ENCODE measurements at regions of chr19 and their contacts with region 1.

Region 1: GRCh38 chr19:57682226-57682766 is 519 bp downstream of the ZNF551 start:
- DNase-seq: no peak
- ATAC-seq: no peak
- H3K4me3 ChIP-seq: peak overlapping the region; percentile 93
- H3K4me3 Mint-ChIP-seq: peak overlapping the region; percentile 89 to 99 (median 97)
- H3K27ac ChIP-seq: peak overlapping the region; percentile 80
- H3K27ac Mint-ChIP-seq: peak overlapping the region; percentile 90 to 98 (median 96)
- H3K4me1 ChIP-seq: peaks cover 9 to 13% of the 10 kb centered on the region in 2 donors
- H3K4me1 Mint-ChIP-seq: peaks cover 25 to 46% (median 39%) of the 10 kb centered on the region in 7 donors
- H3K27me3 ChIP-seq: no peaks in the 10 kb centered on the region
- H3K27me3 Mint-ChIP-seq: peaks cover 2 to 8% (median 7%) of the 10 kb centered on the region in 5 donors

Region 2: DNA sequence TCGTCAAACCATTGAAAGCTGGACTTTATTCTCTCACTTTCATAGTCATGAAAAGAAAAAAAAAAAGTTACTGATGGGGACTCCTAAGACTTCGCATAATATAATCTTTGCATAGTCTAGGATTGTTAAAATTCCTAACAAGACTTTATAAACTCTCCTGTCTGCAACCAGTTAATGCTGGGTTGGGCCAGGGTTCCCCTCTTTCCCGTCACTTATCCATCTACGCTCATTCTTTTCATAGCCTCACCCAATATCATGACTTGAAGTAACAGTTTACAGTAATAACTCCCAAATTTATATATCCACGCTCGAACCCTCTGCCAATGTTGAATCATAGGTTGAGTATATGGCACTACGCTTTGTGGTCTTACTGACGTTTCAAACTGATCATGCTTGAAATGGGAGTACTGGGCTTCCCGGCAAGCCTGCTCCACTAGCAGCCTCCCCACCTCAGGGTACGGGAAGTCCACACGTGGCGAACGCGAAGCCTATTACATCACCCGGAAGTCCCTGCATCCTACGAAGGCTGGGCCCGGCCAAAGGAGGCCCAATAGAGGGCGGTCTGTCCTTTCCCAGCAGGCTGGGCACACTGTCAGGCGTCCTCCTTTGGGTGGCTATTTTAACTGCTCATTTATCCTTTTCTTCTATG is 402.8 kb before region 1 on chr19:
- CTCF ChIA-PET with region 1: no interaction called
- POLR2A ChIA-PET with region 1: no interaction called
- intact Hi-C with region 1: loop called in 1 of 2 experiments (anchors 1 kb)
- DNase-seq: peak in 6 of 9 donors; percentile 60 to 81 (median 78)
- ATAC-seq: peak; percentile 85
- H3K4me3 ChIP-seq: peak overlapping the region; percentile 80
- H3K4me3 Mint-ChIP-seq: no peak overlapping the region
- H3K27ac ChIP-seq: peak overlapping the region; percentile 98
- H3K27ac Mint-ChIP-seq: peak overlapping the region in 2 of 9 donors; percentile 6 to 51
- H3K4me1 ChIP-seq: peaks cover 18 to 23% of the 10 kb centered on the region in 2 donors
- H3K4me1 Mint-ChIP-seq: peaks cover 7 to 33% (median 25%) of the 10 kb centered on the region in 7 donors
- H3K27me3 ChIP-seq: no peaks in the 10 kb centered on the region
- H3K27me3 Mint-ChIP-seq: no peaks in the 10 kb centered on the region

Region 3: DNA sequence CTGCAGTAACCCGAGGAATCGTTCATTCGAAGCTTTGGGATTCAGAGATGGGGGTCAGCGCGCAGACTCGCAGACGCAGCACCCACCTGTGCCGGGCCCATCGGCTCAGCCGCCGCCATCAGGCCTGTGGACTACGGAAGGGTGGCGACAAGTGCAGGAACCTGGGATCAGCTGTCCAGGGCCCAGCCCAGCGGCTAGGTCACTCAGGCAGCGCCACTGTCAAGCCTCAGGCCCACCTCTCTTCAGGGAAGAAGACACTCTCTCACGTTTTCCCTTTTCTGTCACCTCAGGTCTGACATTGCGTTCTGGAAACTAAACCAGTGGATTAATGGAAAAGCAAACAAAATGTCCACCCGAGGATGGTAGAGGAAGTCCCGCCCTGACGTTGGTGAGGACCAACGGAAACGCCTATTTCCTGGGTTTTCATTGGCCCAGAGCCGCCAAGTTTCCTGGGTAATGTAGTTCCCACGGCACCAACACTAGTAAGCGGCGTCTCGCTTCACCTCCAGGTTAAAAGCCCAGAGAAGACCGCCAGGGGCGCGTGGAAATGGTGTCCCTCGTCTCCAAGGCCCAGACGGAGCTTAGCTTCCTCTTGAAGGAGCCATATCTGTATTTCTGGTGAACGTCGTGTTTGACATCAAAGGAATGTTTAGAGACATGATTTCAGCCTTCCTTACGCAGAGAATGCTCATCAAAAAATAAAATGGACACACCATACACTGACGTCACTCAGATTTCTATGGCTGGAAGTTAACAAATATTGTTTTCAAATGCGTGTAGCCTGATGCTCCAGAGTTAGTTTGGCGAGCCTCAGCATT is 204.9 kb before region 1 on chr19 and contains the start of gene ZNF772:
- CTCF ChIA-PET with region 1: no interaction called
- POLR2A ChIA-PET with region 1: no interaction called
- intact Hi-C with region 1: loop called in 1 of 2 experiments (anchors 1 kb)
- DNase-seq: peak; percentile 55 to 96 (median 88)
- ATAC-seq: peak; percentile 99
- H3K4me3 ChIP-seq: peak within 1 kb of the TSS; percentile 80
- H3K4me3 Mint-ChIP-seq: peak within 1 kb of the TSS; percentile 87 to 95 (median 92)
- H3K27ac ChIP-seq: peak within 1 kb of the TSS; percentile 77
- H3K27ac Mint-ChIP-seq: peak within 1 kb of the TSS; percentile 84 to 96 (median 89)
- H3K4me1 ChIP-seq: peaks cover 5 to 12% of the 10 kb centered on the region in 2 donors
- H3K4me1 Mint-ChIP-seq: peaks cover 10 to 26% (median 19%) of the 10 kb centered on the region in 7 donors
- H3K27me3 ChIP-seq: no peaks in the 10 kb centered on the region
- H3K27me3 Mint-ChIP-seq: peaks cover 0 to 7% (median 0%) of the 10 kb centered on the region in 5 donors
- total RNA-seq, gene ZNF772: 1.5 to 20.5 (median 4.3) TPM

Region 4: GRCh38 chr19:57613941-57614743 is 68.2 kb before region 1 on chr19 and contains the start of gene ZNF134:
- CTCF ChIA-PET with region 1: no interaction called
- POLR2A ChIA-PET with region 1: no interaction called
- intact Hi-C with region 1: loop called (anchors 1 kb)
- DNase-seq: peak; percentile 74 to 90 (median 84)
- ATAC-seq: peak; percentile 100
- H3K4me3 ChIP-seq: peak within 1 kb of the TSS; percentile 94
- H3K4me3 Mint-ChIP-seq: peak within 1 kb of the TSS; percentile 79 to 95 (median 90)
- H3K27ac ChIP-seq: peak within 1 kb of the TSS; percentile 76
- H3K27ac Mint-ChIP-seq: peak within 1 kb of the TSS; percentile 78 to 92 (median 86)
- H3K4me1 ChIP-seq: peaks cover 14 to 15% of the 10 kb centered on the region in 2 donors
- H3K4me1 Mint-ChIP-seq: peaks cover 18 to 43% (median 34%) of the 10 kb centered on the region in 7 donors
- H3K27me3 ChIP-seq: no peaks in the 10 kb centered on the region
- H3K27me3 Mint-ChIP-seq: no peaks in the 10 kb centered on the region
- total RNA-seq, gene ZNF134: 14.6 to 33.9 (median 25.7) TPM

Region 5: GRCh38 chr19:57719424-57719823 is 37.1 kb after region 1 on chr19:
- CTCF ChIA-PET with region 1: no interaction called
- POLR2A ChIA-PET with region 1: no interaction called
- intact Hi-C with region 1: no loop called
- DNase-seq: no peak
- ATAC-seq: no peak
- H3K4me3 ChIP-seq: peak overlapping the region; percentile 14
- H3K4me3 Mint-ChIP-seq: no peak overlapping the region
- H3K27ac ChIP-seq: no peak overlapping the region
- H3K27ac Mint-ChIP-seq: no peak overlapping the region
- H3K4me1 ChIP-seq: no peaks in the 10 kb centered on the region
- H3K4me1 Mint-ChIP-seq: peaks cover 0 to 11% (median 5%) of the 10 kb centered on the region in 7 donors
- H3K27me3 ChIP-seq: no peaks in the 10 kb centered on the region
- H3K27me3 Mint-ChIP-seq: no peaks in the 10 kb centered on the region

Region 6: GRCh38 chr19:57746580-57747471 is 64.5 kb after region 1 on chr19 and contains the start of gene ZNF776:
- CTCF ChIA-PET with region 1: no interaction called
- POLR2A ChIA-PET with region 1: no interaction called
- intact Hi-C with region 1: loop called (anchors 1 to 2 kb)
- DNase-seq: peak; percentile 40 to 90 (median 84)
- ATAC-seq: peak; percentile 99
- H3K4me3 ChIP-seq: peak within 1 kb of the TSS; percentile 86
- H3K4me3 Mint-ChIP-seq: peak within 1 kb of the TSS; percentile 91 to 99 (median 94)
- H3K27ac ChIP-seq: peak within 1 kb of the TSS; percentile 85
- H3K27ac Mint-ChIP-seq: peak within 1 kb of the TSS; percentile 81 to 99 (median 94)
- H3K4me1 ChIP-seq: peaks cover 6 to 16% of the 10 kb centered on the region in 2 donors
- H3K4me1 Mint-ChIP-seq: peaks cover 13 to 40% (median 26%) of the 10 kb centered on the region in 7 donors
- H3K27me3 ChIP-seq: no peaks in the 10 kb centered on the region
- H3K27me3 Mint-ChIP-seq: no peaks in the 10 kb centered on the region
- total RNA-seq, gene ZNF776: 18.9 to 52.3 (median 21.8) TPM